ENCODE measurements at regions of chr11 and their contacts with region 1.

Region 1: DNA sequence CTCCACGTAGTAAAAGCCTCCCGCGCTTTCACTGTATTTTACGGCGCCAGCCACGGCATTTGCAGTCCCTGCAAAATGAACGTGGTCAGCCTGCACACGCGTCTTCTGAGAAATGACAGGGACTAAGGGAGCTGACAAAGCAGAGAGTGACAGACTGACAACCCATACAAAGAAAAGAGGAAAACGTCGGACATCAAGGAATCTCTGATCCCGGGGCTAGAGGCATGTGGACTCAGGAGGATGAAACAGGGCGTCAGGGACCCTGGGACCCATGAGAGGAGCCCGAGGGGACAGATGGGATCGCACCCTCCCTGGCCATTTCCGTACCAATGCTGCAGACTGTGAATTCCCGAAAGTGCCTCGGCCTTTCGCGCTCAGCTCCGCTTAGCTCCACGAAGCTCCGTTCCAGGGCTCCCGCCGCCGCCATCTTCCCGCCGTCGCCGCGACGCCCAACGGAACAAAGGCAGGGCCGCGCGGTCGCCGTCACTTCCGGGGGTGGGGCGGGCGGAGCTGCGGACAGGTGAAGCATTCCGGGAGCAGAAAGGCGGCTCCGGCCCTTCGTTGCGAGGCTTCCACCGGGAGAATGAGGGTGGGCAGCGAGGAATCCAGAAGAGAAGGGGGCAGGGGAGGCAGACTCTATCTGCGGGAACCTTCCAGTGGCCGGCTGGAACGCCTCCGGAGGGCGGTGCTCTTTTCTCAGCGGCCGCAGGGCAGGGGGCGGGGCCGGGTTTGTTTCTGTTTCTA is at the start of gene NUP160:
- DNase-seq: peak; percentile 74 to 93 (median 86)
- ATAC-seq: peak; percentile 86
- H3K4me3 ChIP-seq: peak within 1 kb of the TSS; percentile 75
- H3K4me3 Mint-ChIP-seq: peak within 1 kb of the TSS; percentile 100
- H3K27ac ChIP-seq: peak within 1 kb of the TSS; percentile 82 to 94
- H3K27ac Mint-ChIP-seq: peak within 1 kb of the TSS; percentile 98
- H3K4me1 ChIP-seq: peaks cover 46% of the 10 kb centered on the region
- H3K4me1 Mint-ChIP-seq: peaks cover 66% of the 10 kb centered on the region
- H3K27me3 ChIP-seq: no peaks in the 10 kb centered on the region
- H3K27me3 Mint-ChIP-seq: no peaks in the 10 kb centered on the region
- CTCF ChIP-seq: peak; percentile 15
- total RNA-seq, gene NUP160: 41.9 to 47.9 TPM

Region 2: GRCh38 chr11:47373876-47374720 is 474.0 kb before region 1 on chr11:
- CTCF ChIA-PET with region 1: no interaction called
- POLR2A ChIA-PET with region 1: no interaction called
- intact Hi-C with region 1: loop called in 1 of 2 experiments (anchors 5 kb)
- DNase-seq: peak; percentile 73 to 93 (median 84)
- ATAC-seq: peak; percentile 95
- H3K4me3 ChIP-seq: no peak overlapping the region
- H3K4me3 Mint-ChIP-seq: no peak overlapping the region
- H3K27ac ChIP-seq: no peak overlapping the region
- H3K27ac Mint-ChIP-seq: no peak overlapping the region
- H3K4me1 ChIP-seq: peaks cover 13% of the 10 kb centered on the region
- H3K4me1 Mint-ChIP-seq: no peaks in the 10 kb centered on the region
- H3K27me3 ChIP-seq: no peaks in the 10 kb centered on the region
- H3K27me3 Mint-ChIP-seq: no peaks in the 10 kb centered on the region
- CTCF ChIP-seq: peak; percentile 93

Region 3: GRCh38 chr11:47642099-47642855 is 205.8 kb before region 1 on chr11 and contains the start of gene MTCH2:
- CTCF ChIA-PET with region 1: no interaction called
- POLR2A ChIA-PET with region 1: no interaction called
- intact Hi-C with region 1: loop called in 1 of 2 experiments (anchors 2 kb)
- DNase-seq: peak; percentile 91 to 99 (median 95)
- ATAC-seq: peak; percentile 92
- H3K4me3 ChIP-seq: peak within 1 kb of the TSS; percentile 96
- H3K4me3 Mint-ChIP-seq: peak within 1 kb of the TSS; percentile 90
- H3K27ac ChIP-seq: peak within 1 kb of the TSS; percentile 88 to 91
- H3K27ac Mint-ChIP-seq: peak within 1 kb of the TSS; percentile 89
- H3K4me1 ChIP-seq: peaks cover 28% of the 10 kb centered on the region
- H3K4me1 Mint-ChIP-seq: peaks cover 26% of the 10 kb centered on the region
- H3K27me3 ChIP-seq: no peaks in the 10 kb centered on the region
- H3K27me3 Mint-ChIP-seq: no peaks in the 10 kb centered on the region
- CTCF ChIP-seq: peak; percentile 6
- total RNA-seq, gene MTCH2: 11.8 to 12.7 TPM

Region 4: DNA sequence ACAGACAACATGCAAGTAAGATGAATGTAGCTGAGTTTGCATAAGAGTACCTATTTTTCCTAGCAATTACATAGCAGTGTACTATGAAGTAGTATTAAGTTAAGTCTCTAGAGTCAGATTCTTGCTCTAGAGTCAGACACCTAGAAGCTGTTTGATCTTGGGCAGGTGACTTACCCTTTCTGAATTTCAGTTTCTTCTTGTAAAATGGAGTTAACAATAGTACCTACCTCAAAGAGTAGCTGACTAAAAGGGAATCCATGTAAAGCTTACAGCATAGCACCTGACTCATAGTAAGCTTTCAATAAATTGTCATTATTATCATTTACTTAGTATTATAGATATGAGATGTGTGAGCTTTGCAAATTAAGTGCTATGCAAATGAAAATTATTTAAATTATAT is 84.5 kb after region 1 on chr11:
- CTCF ChIA-PET with region 1: interaction called, 4 read pairs
- POLR2A ChIA-PET with region 1: no interaction called
- intact Hi-C with region 1: loop called in 1 of 2 experiments (anchors 5 kb)
- DNase-seq: no peak
- ATAC-seq: no peak
- H3K4me3 ChIP-seq: no peak overlapping the region
- H3K4me3 Mint-ChIP-seq: no peak overlapping the region
- H3K27ac ChIP-seq: no peak overlapping the region
- H3K27ac Mint-ChIP-seq: no peak overlapping the region
- H3K4me1 ChIP-seq: peaks cover 12% of the 10 kb centered on the region
- H3K4me1 Mint-ChIP-seq: peaks cover 23% of the 10 kb centered on the region
- H3K27me3 ChIP-seq: no peaks in the 10 kb centered on the region
- H3K27me3 Mint-ChIP-seq: no peaks in the 10 kb centered on the region
- CTCF ChIP-seq: no peak

Measured in CD4-positive, alpha-beta T cell (primary cell).